CD8-positive, alpha-beta memory T cell (primary cell): ENCODE measurements at regions of chr14 and their contacts with region 1.

Region 1: DNA sequence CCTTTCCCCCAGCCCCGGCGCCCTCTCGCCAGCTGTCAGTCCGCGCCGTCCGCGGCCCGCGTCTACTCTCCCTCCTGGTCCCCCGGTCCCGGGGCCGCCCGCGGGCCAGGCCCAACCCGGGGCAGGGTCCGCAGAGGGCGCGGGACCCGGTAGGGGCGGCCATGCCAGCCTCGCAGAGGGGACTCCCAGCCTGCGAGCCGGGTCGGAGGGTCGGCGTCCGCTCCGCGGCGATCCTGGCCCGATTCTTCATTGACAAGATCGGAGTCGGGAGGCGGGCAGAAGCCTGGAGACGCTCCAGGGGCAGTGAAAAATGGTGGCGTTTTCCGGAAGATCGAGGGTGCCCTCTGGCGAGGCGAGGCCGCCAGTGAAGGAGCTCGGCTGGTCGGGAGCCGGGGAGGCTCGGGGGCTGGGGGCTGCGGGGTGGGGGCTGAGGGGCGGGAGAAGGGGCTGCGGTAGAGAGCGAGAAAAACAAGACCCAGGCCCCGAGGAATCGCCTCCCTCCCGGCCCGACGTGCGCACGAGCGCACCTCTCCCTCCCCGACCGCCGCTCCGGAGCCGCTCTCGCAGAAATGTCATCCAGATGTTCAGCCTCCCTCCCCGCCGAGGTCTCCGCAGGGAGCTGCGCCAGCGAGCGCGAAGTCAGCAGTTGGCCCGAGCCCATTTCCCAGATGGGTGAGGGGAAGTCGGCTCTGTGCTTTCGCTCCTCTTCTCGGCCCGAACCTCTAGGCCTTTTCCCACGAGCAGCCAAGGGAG is 647 bp upstream of the TGFB3 start:
- DNase-seq: peak; percentile 66 to 85 (median 75)
- H3K4me3 ChIP-seq: peak overlapping the region; percentile 67
- H3K4me3 Mint-ChIP-seq: peak overlapping the region; percentile 83 to 95 (median 86)
- H3K27ac ChIP-seq: peak overlapping the region; percentile 65
- H3K27ac Mint-ChIP-seq: peak overlapping the region; percentile 77 to 97 (median 87)
- H3K4me1 ChIP-seq: peaks cover 26% of the 10 kb centered on the region
- H3K4me1 Mint-ChIP-seq: peaks cover 42 to 67% (median 55%) of the 10 kb centered on the region in 3 donors
- H3K27me3 ChIP-seq: no peaks in the 10 kb centered on the region
- H3K27me3 Mint-ChIP-seq: peaks cover 0 to 5% of the 10 kb centered on the region in 2 donors

Region 2: GRCh38 chr14:75577729-75578101 is 404.7 kb before region 1 on chr14:
- CTCF ChIA-PET with region 1: interaction called, 19 read pairs
- POLR2A ChIA-PET with region 1: interaction called, 3 read pairs
- DNase-seq: peak; percentile 52 to 78 (median 54)
- H3K4me3 ChIP-seq: peak overlapping the region; percentile 66
- H3K4me3 Mint-ChIP-seq: peak overlapping the region; percentile 89 to 99 (median 95)
- H3K27ac ChIP-seq: peak overlapping the region; percentile 21
- H3K27ac Mint-ChIP-seq: peak overlapping the region; percentile 5 to 96 (median 88)
- H3K4me1 ChIP-seq: peaks cover 9% of the 10 kb centered on the region
- H3K4me1 Mint-ChIP-seq: peaks cover 9 to 20% (median 9%) of the 10 kb centered on the region in 3 donors
- H3K27me3 ChIP-seq: no peaks in the 10 kb centered on the region
- H3K27me3 Mint-ChIP-seq: no peaks in the 10 kb centered on the region

Region 3: DNA sequence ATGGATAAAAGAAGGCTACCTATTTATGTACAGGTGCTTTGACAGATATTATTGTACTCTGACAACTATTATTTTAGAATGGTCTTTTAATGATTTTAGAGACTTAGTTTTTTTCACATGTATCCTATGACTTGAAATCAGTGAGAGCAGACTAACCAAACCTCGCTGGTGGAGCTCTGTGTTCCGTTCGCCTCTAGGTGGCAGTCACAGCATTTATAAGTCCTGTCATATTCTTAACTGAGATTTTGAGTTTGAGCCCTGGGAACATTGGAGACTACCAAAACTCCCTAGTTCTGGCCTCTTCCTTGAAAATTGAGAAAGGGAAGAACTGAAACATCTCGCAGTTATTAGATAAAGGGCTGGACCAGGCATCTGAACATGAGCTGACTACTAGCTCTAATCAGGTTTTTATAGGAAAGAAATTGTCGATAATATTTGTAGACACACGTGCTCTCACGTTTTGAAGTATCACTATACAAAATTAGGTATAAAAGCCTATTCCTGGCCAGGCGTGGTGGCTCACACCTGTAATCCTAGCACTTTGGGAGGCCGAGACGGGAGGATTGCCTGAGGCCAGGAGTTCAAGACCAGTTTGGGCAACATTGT is 273.1 kb before region 1 on chr14:
- CTCF ChIA-PET with region 1: interaction called, 71 read pairs
- POLR2A ChIA-PET with region 1: interaction called, 4 read pairs
- DNase-seq: peak; percentile 15 to 60 (median 33)
- H3K4me3 ChIP-seq: no peak overlapping the region
- H3K4me3 Mint-ChIP-seq: no peak overlapping the region
- H3K27ac ChIP-seq: no peak overlapping the region
- H3K27ac Mint-ChIP-seq: no peak overlapping the region
- H3K4me1 ChIP-seq: no peaks in the 10 kb centered on the region
- H3K4me1 Mint-ChIP-seq: no peaks in the 10 kb centered on the region
- H3K27me3 ChIP-seq: no peaks in the 10 kb centered on the region
- H3K27me3 Mint-ChIP-seq: no peaks in the 10 kb centered on the region

Region 4: DNA sequence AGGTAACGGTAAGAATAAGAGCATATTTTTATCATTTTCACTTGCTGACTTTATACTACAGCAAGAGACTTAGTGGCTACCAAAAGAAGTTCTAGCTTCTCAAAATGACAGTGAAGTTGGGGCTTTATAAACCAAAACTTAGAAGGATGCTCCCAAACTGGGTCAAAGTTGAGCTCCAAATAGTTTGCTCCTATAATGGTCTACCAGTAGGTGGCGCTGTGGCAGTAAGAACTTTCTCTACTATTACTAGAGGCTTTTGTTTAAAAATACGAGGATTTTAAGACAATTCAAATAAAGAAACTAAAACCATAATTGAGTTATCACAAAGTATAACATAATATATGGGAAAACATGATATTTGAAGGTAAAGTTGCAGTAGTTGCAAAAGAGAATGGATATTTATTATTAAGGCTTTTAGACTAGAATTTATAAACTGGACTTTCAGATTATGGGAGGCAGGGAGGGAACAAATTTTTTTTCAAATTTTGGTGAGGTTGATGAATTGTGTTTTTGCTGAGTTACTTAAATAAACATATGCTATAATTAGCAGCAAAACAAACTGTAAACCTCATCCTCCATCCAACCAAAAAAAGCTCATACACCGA is 75.7 kb before region 1 on chr14:
- CTCF ChIA-PET with region 1: interaction called, 81 read pairs
- POLR2A ChIA-PET with region 1: interaction called, 9 read pairs
- DNase-seq: peak; percentile 43 to 68 (median 55)
- H3K4me3 ChIP-seq: no peak overlapping the region
- H3K4me3 Mint-ChIP-seq: no peak overlapping the region
- H3K27ac ChIP-seq: no peak overlapping the region
- H3K27ac Mint-ChIP-seq: peak overlapping the region in 1 of 8 donors; percentile 26
- H3K4me1 ChIP-seq: no peaks in the 10 kb centered on the region
- H3K4me1 Mint-ChIP-seq: no peaks in the 10 kb centered on the region
- H3K27me3 ChIP-seq: no peaks in the 10 kb centered on the region
- H3K27me3 Mint-ChIP-seq: peaks cover 0 to 1% of the 10 kb centered on the region in 2 donors

Region 5: DNA sequence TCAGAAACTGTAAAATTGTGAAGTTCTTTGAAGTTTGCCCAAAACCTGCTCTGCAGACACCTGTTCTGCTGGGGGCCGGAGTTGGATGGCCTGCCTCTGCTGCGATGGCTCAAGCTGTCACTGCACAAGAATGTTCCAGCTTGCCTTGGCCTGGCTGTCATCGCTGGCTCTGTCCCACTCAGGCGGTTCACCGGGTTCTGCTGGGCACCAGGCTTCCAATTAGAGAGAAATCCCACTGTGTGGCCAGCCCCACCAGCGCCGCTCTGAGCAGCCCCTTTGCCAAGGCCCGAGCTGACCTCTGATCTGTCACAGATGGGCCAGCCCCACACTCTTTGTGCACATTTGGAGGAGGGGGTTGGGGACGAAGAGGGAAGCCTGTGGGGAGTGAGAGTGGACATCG is 97.6 kb after region 1 on chr14:
- CTCF ChIA-PET with region 1: no interaction called
- POLR2A ChIA-PET with region 1: no interaction called
- DNase-seq: no peak
- H3K4me3 ChIP-seq: no peak overlapping the region
- H3K4me3 Mint-ChIP-seq: no peak overlapping the region
- H3K27ac ChIP-seq: no peak overlapping the region
- H3K27ac Mint-ChIP-seq: no peak overlapping the region
- H3K4me1 ChIP-seq: no peaks in the 10 kb centered on the region
- H3K4me1 Mint-ChIP-seq: no peaks in the 10 kb centered on the region
- H3K27me3 ChIP-seq: no peaks in the 10 kb centered on the region
- H3K27me3 Mint-ChIP-seq: no peaks in the 10 kb centered on the region

Region 6: GRCh38 chr14:76146976-76147375 is 164.5 kb after region 1 on chr14:
- CTCF ChIA-PET with region 1: no interaction called
- POLR2A ChIA-PET with region 1: no interaction called
- DNase-seq: no peak
- H3K4me3 ChIP-seq: no peak overlapping the region
- H3K4me3 Mint-ChIP-seq: no peak overlapping the region
- H3K27ac ChIP-seq: no peak overlapping the region
- H3K27ac Mint-ChIP-seq: no peak overlapping the region
- H3K4me1 ChIP-seq: no peaks in the 10 kb centered on the region
- H3K4me1 Mint-ChIP-seq: peaks cover 8 to 10% (median 10%) of the 10 kb centered on the region in 3 donors
- H3K27me3 ChIP-seq: no peaks in the 10 kb centered on the region
- H3K27me3 Mint-ChIP-seq: peaks cover 4 to 15% of the 10 kb centered on the region in 2 donors